Activated CD4-positive, alpha-beta T cell treated with anti-CD3 and anti-CD28 coated beads, Interleukin-2, amount 10 ng/mL, durations not matched to agents 24 days and 14 days (primary cell): ENCODE measurements at regions of chr5 and their contacts with region 1.

Region 1: GRCh38 chr5:40834849-40835787 is at the start of gene RPL37:
- DNase-seq: peak; percentile 97
- H3K4me3 Mint-ChIP-seq: peak within 1 kb of the TSS; percentile 97
- H3K27ac Mint-ChIP-seq: peak within 1 kb of the TSS; percentile 99
- H3K4me1 Mint-ChIP-seq: peaks cover 43% of the 10 kb centered on the region
- H3K27me3 Mint-ChIP-seq: no peaks in the 10 kb centered on the region
- total RNA-seq, gene RPL37: 1,546 and 1,565 TPM in 2 replicates

Region 2: GRCh38 chr5:40404613-40405012 is 430.5 kb before region 1 on chr5:
- intact Hi-C with region 1: loop called (anchors 10 kb)
- DNase-seq: peak; percentile 80
- H3K4me3 Mint-ChIP-seq: peak overlapping the region; percentile 21
- H3K27ac Mint-ChIP-seq: peak overlapping the region; percentile 75
- H3K4me1 Mint-ChIP-seq: peaks cover 71% of the 10 kb centered on the region
- H3K27me3 Mint-ChIP-seq: no peaks in the 10 kb centered on the region

Region 3: GRCh38 chr5:40798012-40798855 is 36.9 kb before region 1 on chr5 and contains the start of gene PRKAA1:
- intact Hi-C with region 1: loop called (anchors 1 kb)
- DNase-seq: peak; percentile 97
- H3K4me3 Mint-ChIP-seq: peak within 1 kb of the TSS; percentile 88
- H3K27ac Mint-ChIP-seq: peak within 1 kb of the TSS; percentile 97
- H3K4me1 Mint-ChIP-seq: peaks cover 36% of the 10 kb centered on the region
- H3K27me3 Mint-ChIP-seq: peaks cover 15% of the 10 kb centered on the region
- total RNA-seq, gene PRKAA1: 44.8 and 49.1 TPM in 2 replicates

Region 4: DNA sequence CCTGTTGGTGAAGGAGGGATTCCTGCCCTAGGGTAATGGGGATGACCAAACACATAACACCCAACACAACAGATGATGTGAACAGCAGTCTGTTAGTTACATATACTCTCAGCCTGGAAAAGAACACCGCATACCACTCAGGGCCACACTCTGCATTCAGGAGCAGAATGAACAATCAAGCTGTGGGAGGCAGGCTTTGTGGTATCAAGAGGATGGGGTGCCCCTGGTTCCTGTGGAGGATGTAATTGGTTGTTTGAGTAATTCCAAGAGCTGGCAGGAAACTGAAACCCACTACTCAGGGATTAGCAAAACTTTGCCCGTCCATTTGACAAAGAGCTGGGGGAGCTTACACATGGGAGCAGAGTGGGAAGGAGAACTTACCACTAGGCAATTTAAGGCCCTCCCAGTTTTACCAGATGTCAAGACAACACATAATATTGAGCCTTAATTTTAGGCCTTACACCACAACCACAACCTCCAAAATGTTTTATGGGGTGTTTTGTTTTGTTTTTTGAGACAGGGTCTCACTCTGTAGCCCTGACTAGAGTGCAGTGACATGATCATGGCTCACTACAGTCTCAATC is 21.3 kb before region 1 on chr5:
- intact Hi-C with region 1: loop called (anchors 1 kb)
- DNase-seq: no peak
- H3K4me3 Mint-ChIP-seq: no peak overlapping the region
- H3K27ac Mint-ChIP-seq: peak overlapping the region; percentile 73
- H3K4me1 Mint-ChIP-seq: peaks cover 9% of the 10 kb centered on the region
- H3K27me3 Mint-ChIP-seq: no peaks in the 10 kb centered on the region

Region 5: DNA sequence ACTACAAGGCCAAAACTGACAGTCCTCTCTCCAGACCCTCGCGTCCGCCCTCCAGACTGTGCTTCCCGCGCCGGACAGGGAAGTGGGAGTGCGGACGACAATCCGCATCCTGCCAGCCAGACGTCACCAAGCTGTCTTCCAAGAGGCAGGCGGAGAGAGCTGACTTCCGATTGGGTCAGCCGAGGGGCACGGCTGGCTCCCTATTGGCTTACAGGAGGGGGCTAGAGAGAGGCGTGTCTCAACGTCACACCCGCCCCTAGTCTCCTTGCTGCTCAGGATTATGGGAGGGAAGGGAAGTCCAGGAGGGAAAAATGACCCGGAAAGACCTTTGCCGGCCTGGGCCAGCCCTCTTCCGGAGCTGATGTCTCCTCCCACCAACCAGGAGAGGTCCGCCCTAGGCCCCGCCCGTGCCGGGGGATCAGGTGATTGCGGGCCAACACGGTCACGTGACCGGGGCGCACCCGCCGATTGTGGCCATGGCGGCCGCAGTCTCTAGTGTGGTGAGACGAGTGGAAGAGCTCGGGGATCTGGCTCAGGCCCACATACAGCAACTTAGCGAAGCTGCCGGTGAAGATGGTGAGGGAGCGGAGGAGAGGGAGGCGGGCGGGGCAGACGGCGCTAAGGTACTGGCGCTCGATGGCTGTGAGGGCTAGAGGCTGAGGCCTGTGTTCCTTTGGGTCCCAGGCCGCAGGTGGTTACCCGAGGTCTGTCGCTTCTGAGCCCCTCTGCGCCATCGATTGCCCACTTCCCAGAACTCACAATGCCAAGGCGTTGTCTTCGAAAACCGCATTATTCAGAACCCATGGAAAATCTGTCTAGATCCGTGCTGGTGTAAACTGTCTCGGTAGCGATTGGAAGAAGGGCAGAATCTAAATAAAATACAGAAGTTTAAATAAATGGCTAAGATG is 1069.0 kb after region 1 on chr5 and contains the start of gene RIMOC1:
- intact Hi-C with region 1: loop called (anchors 10 kb)
- DNase-seq: peak; percentile 100
- H3K4me3 Mint-ChIP-seq: peak within 1 kb of the TSS; percentile 92
- H3K27ac Mint-ChIP-seq: peak within 1 kb of the TSS; percentile 96
- H3K4me1 Mint-ChIP-seq: peaks cover 43% of the 10 kb centered on the region
- H3K27me3 Mint-ChIP-seq: peaks cover 9% of the 10 kb centered on the region
- total RNA-seq, gene RIMOC1: 29.6 and 31.7 TPM in 2 replicates

Region 6: DNA sequence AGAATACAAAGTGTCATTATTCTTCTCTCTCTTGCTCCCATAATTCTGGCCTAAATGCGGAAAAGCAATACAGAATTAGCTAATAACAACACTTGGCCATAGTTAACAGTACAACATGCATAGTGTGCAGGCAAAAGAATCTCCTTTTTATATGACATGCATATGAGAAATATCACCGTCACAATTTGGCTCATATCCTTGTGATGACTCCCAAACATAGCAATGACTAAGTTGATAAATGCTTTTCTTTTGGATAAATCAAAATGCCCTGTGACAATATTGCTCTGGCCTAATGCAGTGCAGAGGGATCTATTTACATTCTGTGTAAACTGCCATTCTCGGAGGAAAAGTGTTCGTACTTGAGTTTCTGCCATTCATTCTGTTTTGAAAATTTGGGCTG is 1466.2 kb after region 1 on chr5:
- intact Hi-C with region 1: no loop called
- DNase-seq: no peak
- H3K4me3 Mint-ChIP-seq: no peak overlapping the region
- H3K27ac Mint-ChIP-seq: no peak overlapping the region
- H3K4me1 Mint-ChIP-seq: no peaks in the 10 kb centered on the region
- H3K27me3 Mint-ChIP-seq: no peaks in the 10 kb centered on the region